ENCODE measurements at regions of chr20 and their contacts with region 1.

Region 1: GRCh38 chr20:62302341-62303058 is at the start of gene ADRM1:
- DNase-seq: peak; percentile 97
- H3K4me3 Mint-ChIP-seq: peak within 1 kb of the TSS; percentile 91
- H3K27ac Mint-ChIP-seq: peak within 1 kb of the TSS; percentile 97
- H3K4me1 Mint-ChIP-seq: peaks cover 29% of the 10 kb centered on the region
- H3K27me3 Mint-ChIP-seq: no peaks in the 10 kb centered on the region
- total RNA-seq, gene ADRM1: 98.6 to 101 TPM

Region 2: GRCh38 chr20:62121776-62122631 is 180.5 kb before region 1 on chr20 and contains the start of gene LSM14B:
- CTCF ChIA-PET with region 1: no interaction called
- POLR2A ChIA-PET with region 1: no interaction called
- intact Hi-C with region 1: loop called (anchors 1 kb)
- DNase-seq: peak; percentile 97
- H3K4me3 Mint-ChIP-seq: peak within 1 kb of the TSS; percentile 86
- H3K27ac Mint-ChIP-seq: peak within 1 kb of the TSS; percentile 95
- H3K4me1 Mint-ChIP-seq: peaks cover 49% of the 10 kb centered on the region
- H3K27me3 Mint-ChIP-seq: no peaks in the 10 kb centered on the region
- total RNA-seq, gene LSM14B: 33.4 to 35.1 TPM

Region 3: GRCh38 chr20:62327726-62328495 is 25.4 kb after region 1 on chr20:
- CTCF ChIA-PET with region 1: no interaction called
- POLR2A ChIA-PET with region 1: no interaction called
- intact Hi-C with region 1: no loop called
- DNase-seq: no peak
- H3K4me3 Mint-ChIP-seq: no peak overlapping the region
- H3K27ac Mint-ChIP-seq: no peak overlapping the region
- H3K4me1 Mint-ChIP-seq: no peaks in the 10 kb centered on the region
- H3K27me3 Mint-ChIP-seq: no peaks in the 10 kb centered on the region

Region 4: GRCh38 chr20:62386383-62387218 is 84.1 kb after region 1 on chr20 and contains the start of gene RPS21:
- CTCF ChIA-PET with region 1: interaction called, 22 read pairs
- POLR2A ChIA-PET with region 1: interaction called, 12 read pairs
- intact Hi-C with region 1: loop called (anchors 1 kb)
- DNase-seq: peak; percentile 95
- H3K4me3 Mint-ChIP-seq: peak within 1 kb of the TSS; percentile 90
- H3K27ac Mint-ChIP-seq: peak within 1 kb of the TSS; percentile 87
- H3K4me1 Mint-ChIP-seq: peaks cover 42% of the 10 kb centered on the region
- H3K27me3 Mint-ChIP-seq: no peaks in the 10 kb centered on the region
- total RNA-seq, gene RPS21: 2,488 to 2,529 TPM

Region 5: GRCh38 chr20:62500237-62500864 is 197.9 kb after region 1 on chr20:
- CTCF ChIA-PET with region 1: no interaction called
- POLR2A ChIA-PET with region 1: no interaction called
- intact Hi-C with region 1: loop called (anchors 2 kb)
- DNase-seq: peak; percentile 87
- H3K4me3 Mint-ChIP-seq: no peak overlapping the region
- H3K27ac Mint-ChIP-seq: peak overlapping the region; percentile 26
- H3K4me1 Mint-ChIP-seq: peaks cover 29% of the 10 kb centered on the region
- H3K27me3 Mint-ChIP-seq: peaks cover 3% of the 10 kb centered on the region

Region 6: GRCh38 chr20:62740286-62741141 is 438.0 kb after region 1 on chr20:
- CTCF ChIA-PET with region 1: no interaction called
- POLR2A ChIA-PET with region 1: no interaction called
- intact Hi-C with region 1: loop called (anchors 1 kb)
- DNase-seq: peak; percentile 95
- H3K4me3 Mint-ChIP-seq: peak overlapping the region; percentile 48
- H3K27ac Mint-ChIP-seq: peak overlapping the region; percentile 82
- H3K4me1 Mint-ChIP-seq: peaks cover 44% of the 10 kb centered on the region
- H3K27me3 Mint-ChIP-seq: no peaks in the 10 kb centered on the region

Measured in activated CD4-positive, alpha-beta memory T cell treated with anti-CD3 and anti-CD28 coated beads for 36 hours (primary cell).